ENCODE measurements at regions of chr17 and their contacts with region 1.

Region 1: GRCh38 chr17:63735691-63736090 is 5.9 kb downstream of the STRADA start:
- DNase-seq: no peak
- ATAC-seq: no peak
- H3K4me3 Mint-ChIP-seq: no peak overlapping the region
- H3K27ac Mint-ChIP-seq: no peak overlapping the region
- H3K4me1 Mint-ChIP-seq: peaks cover 10% of the 10 kb centered on the region
- H3K27me3 Mint-ChIP-seq: no peaks in the 10 kb centered on the region
- CTCF ChIP-seq: no peak

Region 2: GRCh38 chr17:63082273-63082993 is 653.3 kb before region 1 on chr17:
- CTCF ChIA-PET with region 1: no interaction called
- POLR2A ChIA-PET with region 1: no interaction called
- intact Hi-C with region 1: no loop called
- DNase-seq: no peak
- ATAC-seq: no peak
- H3K4me3 Mint-ChIP-seq: no peak overlapping the region
- H3K27ac Mint-ChIP-seq: no peak overlapping the region
- H3K4me1 Mint-ChIP-seq: no peaks in the 10 kb centered on the region
- H3K27me3 Mint-ChIP-seq: no peaks in the 10 kb centered on the region
- CTCF ChIP-seq: no peak

Region 3: GRCh38 chr17:63722403-63722802 is 13.3 kb before region 1 on chr17:
- CTCF ChIA-PET with region 1: no interaction called
- POLR2A ChIA-PET with region 1: interaction called, 6 read pairs
- intact Hi-C with region 1: loop called (anchors 1 kb)
- DNase-seq: no peak
- ATAC-seq: no peak
- H3K4me3 Mint-ChIP-seq: no peak overlapping the region
- H3K27ac Mint-ChIP-seq: no peak overlapping the region
- H3K4me1 Mint-ChIP-seq: no peaks in the 10 kb centered on the region
- H3K27me3 Mint-ChIP-seq: no peaks in the 10 kb centered on the region
- CTCF ChIP-seq: no peak

Measured in activated B cell treated with CpG ODN at 0.5 μM for 24 hours (primary cell).